Activated CD4-positive, alpha-beta memory T cell treated with anti-CD3 and anti-CD28 coated beads, Interleukin-2, amount 10 ng/mL, durations not matched to agents 7 days and 5 days (primary cell): ENCODE measurements at regions of chr16 and their contacts with region 1.

Region 1: GRCh38 chr16:13919683-13920509 is at the start of gene ERCC4:
- DNase-seq: peak; percentile 99
- H3K4me3 Mint-ChIP-seq: peak within 1 kb of the TSS; percentile 91
- H3K27ac Mint-ChIP-seq: peak within 1 kb of the TSS; percentile 84
- H3K4me1 Mint-ChIP-seq: peaks cover 27% of the 10 kb centered on the region
- H3K27me3 Mint-ChIP-seq: peaks cover 6% of the 10 kb centered on the region
- total RNA-seq, gene ERCC4: 10.1 to 11.1 TPM

Region 2: DNA sequence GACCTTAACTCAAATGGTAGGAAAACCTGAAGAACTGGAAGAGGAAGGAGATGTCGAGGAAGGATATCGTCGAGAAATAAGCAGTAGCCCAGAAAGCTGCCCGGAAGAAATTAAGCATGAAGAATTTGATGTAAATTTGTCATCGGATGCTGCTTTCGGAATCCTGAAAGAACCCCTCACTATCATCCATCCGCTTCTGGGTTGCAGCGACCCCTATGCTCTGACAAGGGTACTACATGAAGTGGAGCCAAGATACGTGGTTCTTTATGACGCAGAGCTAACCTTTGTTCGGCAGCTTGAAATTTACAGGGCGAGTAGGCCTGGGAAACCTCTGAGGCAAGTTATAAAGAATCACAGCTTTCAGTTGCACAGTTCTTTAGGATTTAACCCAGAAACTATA is 15.5 kb after region 1 on chr16:
- CTCF ChIA-PET with region 1: interaction called, 24 read pairs
- POLR2A ChIA-PET with region 1: no interaction called
- DNase-seq: no peak
- H3K4me3 Mint-ChIP-seq: no peak overlapping the region
- H3K27ac Mint-ChIP-seq: no peak overlapping the region
- H3K4me1 Mint-ChIP-seq: peaks cover 14% of the 10 kb centered on the region
- H3K27me3 Mint-ChIP-seq: no peaks in the 10 kb centered on the region

Region 3: GRCh38 chr16:13957197-13958078 is 37.5 kb after region 1 on chr16:
- CTCF ChIA-PET with region 1: interaction called, 10 read pairs
- POLR2A ChIA-PET with region 1: interaction called, 10 read pairs
- DNase-seq: no peak
- H3K4me3 Mint-ChIP-seq: peak overlapping the region; percentile 65
- H3K27ac Mint-ChIP-seq: peak overlapping the region; percentile 58
- H3K4me1 Mint-ChIP-seq: peaks cover 23% of the 10 kb centered on the region
- H3K27me3 Mint-ChIP-seq: peaks cover 8% of the 10 kb centered on the region

Region 4: GRCh38 chr16:14249291-14250032 is 329.6 kb after region 1 on chr16:
- CTCF ChIA-PET with region 1: interaction called, 10 read pairs
- POLR2A ChIA-PET with region 1: no interaction called
- DNase-seq: peak; percentile 54
- H3K4me3 Mint-ChIP-seq: no peak overlapping the region
- H3K27ac Mint-ChIP-seq: no peak overlapping the region
- H3K4me1 Mint-ChIP-seq: no peaks in the 10 kb centered on the region
- H3K27me3 Mint-ChIP-seq: no peaks in the 10 kb centered on the region

Region 5: DNA sequence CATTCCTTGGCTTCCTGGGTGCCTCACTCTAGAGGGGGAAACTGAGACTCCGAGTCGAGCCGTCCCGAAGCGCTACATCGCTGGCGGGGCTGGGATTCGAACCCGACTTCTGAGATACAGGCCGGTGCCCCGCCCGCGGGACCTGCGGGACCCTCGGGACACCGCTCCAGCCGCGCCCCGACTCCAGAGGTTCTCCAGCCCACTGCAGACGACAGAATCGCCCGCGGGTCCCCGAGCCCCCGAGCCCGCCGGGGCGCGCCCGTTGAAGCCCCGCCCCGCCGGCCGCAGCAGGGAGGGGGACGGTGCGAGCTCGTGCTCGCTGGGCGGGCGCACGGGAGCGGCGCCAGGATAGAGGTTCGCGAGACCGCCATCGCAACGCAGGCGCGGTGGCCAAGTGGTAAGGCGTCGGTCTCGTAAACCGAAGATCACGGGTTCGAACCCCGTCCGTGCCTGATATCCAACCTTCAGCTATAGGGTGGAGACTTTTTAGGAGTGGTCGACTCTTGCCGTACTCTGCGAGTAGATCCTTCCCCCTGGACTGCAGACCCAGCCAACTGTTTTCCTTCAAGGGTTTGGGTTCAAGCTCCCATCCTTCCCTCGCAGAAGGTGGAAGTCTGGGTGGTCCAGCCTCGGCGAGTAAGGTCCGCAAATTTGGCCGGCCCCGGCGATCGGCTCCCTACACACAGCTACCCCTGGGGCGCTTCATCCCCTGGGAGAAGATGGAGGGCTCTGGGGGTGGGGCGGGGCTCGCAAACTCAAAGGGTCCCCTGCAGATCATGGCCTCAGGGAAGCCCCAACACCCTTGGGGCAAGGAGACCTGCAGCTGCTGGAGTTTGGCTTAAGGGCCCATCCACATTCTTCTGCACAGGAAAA is 365.9 kb after region 1 on chr16:
- CTCF ChIA-PET with region 1: interaction called, 28 read pairs
- POLR2A ChIA-PET with region 1: interaction called, 6 read pairs
- DNase-seq: peak; percentile 94
- H3K4me3 Mint-ChIP-seq: peak overlapping the region; percentile 93
- H3K27ac Mint-ChIP-seq: peak overlapping the region; percentile 84
- H3K4me1 Mint-ChIP-seq: peaks cover 17% of the 10 kb centered on the region
- H3K27me3 Mint-ChIP-seq: no peaks in the 10 kb centered on the region